Naive thymus-derived CD4-positive, alpha-beta T cell (primary cell): ENCODE measurements at regions of chr6 and their contacts with region 1.

Region 1: DNA sequence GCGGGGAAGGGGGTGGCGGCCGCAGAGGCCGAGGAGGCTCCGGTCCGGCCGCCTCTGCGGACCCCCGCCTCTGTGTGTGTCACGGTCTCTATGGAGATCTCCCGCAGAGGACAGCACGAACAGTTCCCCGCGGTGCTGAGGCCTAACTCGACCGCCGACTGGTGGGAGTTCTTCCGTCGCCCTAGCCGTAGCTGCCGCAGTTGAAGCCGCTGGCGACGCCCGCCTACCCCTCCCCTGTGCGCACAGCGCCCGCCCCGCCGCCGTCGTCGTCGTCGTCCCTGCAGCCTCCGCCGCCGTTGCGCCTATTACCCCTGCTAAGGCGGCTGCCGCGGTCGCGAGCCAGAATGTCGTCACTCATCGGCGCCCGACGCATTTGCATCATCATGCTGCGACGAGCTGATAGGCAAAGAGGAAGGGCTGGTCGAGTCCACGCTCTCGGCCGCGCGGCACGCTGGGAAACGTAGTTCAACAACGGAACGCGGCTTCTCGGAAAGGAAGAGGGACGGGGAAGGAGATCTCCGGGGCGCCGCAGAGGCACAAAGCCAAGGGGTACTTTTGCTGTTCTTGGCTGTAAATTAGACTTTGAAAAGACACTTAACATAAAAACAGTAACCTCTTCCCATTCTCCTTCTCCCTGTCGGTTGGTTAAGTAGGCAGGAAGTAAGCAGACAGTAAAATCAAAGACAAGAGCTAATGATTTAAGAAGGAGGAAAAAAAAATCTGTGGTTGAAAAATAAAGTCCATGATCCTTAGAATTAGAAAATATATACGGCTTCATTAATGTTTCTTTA is at the start of gene NUP153:
- DNase-seq: peak; percentile 98 to 100 (median 99)
- ATAC-seq: peak; percentile 85
- H3K4me3 ChIP-seq: peak within 1 kb of the TSS; percentile 94
- H3K4me3 Mint-ChIP-seq: peak within 1 kb of the TSS; percentile 86 to 97 (median 94)
- H3K27ac ChIP-seq: peak within 1 kb of the TSS; percentile 100
- H3K27ac Mint-ChIP-seq: peak within 1 kb of the TSS; percentile 92 to 98 (median 95)
- H3K4me1 ChIP-seq: peaks cover 24 to 28% of the 10 kb centered on the region in 2 donors
- H3K4me1 Mint-ChIP-seq: peaks cover 13 to 53% (median 37%) of the 10 kb centered on the region in 7 donors
- H3K27me3 ChIP-seq: no peaks in the 10 kb centered on the region
- H3K27me3 Mint-ChIP-seq: peaks cover 0 to 2% (median 0%) of the 10 kb centered on the region in 5 donors
- total RNA-seq, gene NUP153: 47.7 to 90.9 (median 53.0) TPM

Region 2: GRCh38 chr6:17599885-17600526 is 106.8 kb before region 1 on chr6 and contains the start of gene FAM8A1:
- CTCF ChIA-PET with region 1: interaction called, 5 read pairs
- POLR2A ChIA-PET with region 1: interaction called, 44 read pairs
- intact Hi-C with region 1: loop called (anchors 1 kb)
- DNase-seq: peak; percentile 91 to 97 (median 94)
- ATAC-seq: peak; percentile 97
- H3K4me3 ChIP-seq: peak within 1 kb of the TSS; percentile 49
- H3K4me3 Mint-ChIP-seq: peak within 1 kb of the TSS; percentile 85 to 97 (median 94)
- H3K27ac ChIP-seq: peak within 1 kb of the TSS; percentile 94
- H3K27ac Mint-ChIP-seq: peak within 1 kb of the TSS; percentile 84 to 96 (median 93)
- H3K4me1 ChIP-seq: peaks cover 19 to 29% of the 10 kb centered on the region in 2 donors
- H3K4me1 Mint-ChIP-seq: peaks cover 29 to 48% (median 45%) of the 10 kb centered on the region in 7 donors
- H3K27me3 ChIP-seq: no peaks in the 10 kb centered on the region
- H3K27me3 Mint-ChIP-seq: no peaks in the 10 kb centered on the region
- total RNA-seq, gene FAM8A1: 8.0 to 26.1 (median 21.1) TPM

Region 3: DNA sequence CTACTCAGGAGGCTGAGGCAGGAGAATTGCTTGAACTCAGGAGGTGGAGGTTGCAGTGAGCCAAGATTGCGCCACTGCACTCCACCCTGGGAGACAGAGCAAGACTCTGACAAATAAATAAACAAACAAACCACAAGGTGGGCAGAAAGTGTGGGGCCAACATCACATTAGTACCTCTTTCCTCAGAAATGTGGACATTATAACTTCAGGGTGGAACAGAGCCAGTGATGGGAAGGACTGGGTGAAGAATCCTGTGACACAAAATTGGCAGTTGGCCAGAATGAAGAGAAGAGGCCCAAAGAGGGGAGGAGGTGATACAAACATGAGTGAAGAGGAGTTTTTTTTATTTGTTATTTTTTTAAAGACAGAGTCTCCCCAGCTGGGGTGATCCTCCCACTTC is 50.7 kb before region 1 on chr6:
- CTCF ChIA-PET with region 1: no interaction called
- POLR2A ChIA-PET with region 1: no interaction called
- intact Hi-C with region 1: loop called in 1 of 2 experiments (anchors 10 kb)
- DNase-seq: no peak
- ATAC-seq: no peak
- H3K4me3 ChIP-seq: no peak overlapping the region
- H3K4me3 Mint-ChIP-seq: no peak overlapping the region
- H3K27ac ChIP-seq: no peak overlapping the region
- H3K27ac Mint-ChIP-seq: peak overlapping the region in 3 of 9 donors; percentile 37 to 66 (median 62)
- H3K4me1 ChIP-seq: peaks cover 0 to 4% of the 10 kb centered on the region in 2 donors
- H3K4me1 Mint-ChIP-seq: peaks cover 3 to 33% (median 12%) of the 10 kb centered on the region in 7 donors
- H3K27me3 ChIP-seq: no peaks in the 10 kb centered on the region
- H3K27me3 Mint-ChIP-seq: no peaks in the 10 kb centered on the region

Region 4: GRCh38 chr6:17666646-17667045 is 40.1 kb before region 1 on chr6:
- CTCF ChIA-PET with region 1: no interaction called
- POLR2A ChIA-PET with region 1: no interaction called
- intact Hi-C with region 1: loop called (anchors 1 to 5 kb)
- DNase-seq: no peak
- ATAC-seq: no peak
- H3K4me3 ChIP-seq: no peak overlapping the region
- H3K4me3 Mint-ChIP-seq: peak overlapping the region in 1 of 10 donors; percentile 8
- H3K27ac ChIP-seq: no peak overlapping the region
- H3K27ac Mint-ChIP-seq: peak overlapping the region in 5 of 9 donors; percentile 13 to 92 (median 72)
- H3K4me1 ChIP-seq: peaks cover 0 to 13% of the 10 kb centered on the region in 2 donors
- H3K4me1 Mint-ChIP-seq: peaks cover 11 to 39% (median 27%) of the 10 kb centered on the region in 7 donors
- H3K27me3 ChIP-seq: no peaks in the 10 kb centered on the region
- H3K27me3 Mint-ChIP-seq: no peaks in the 10 kb centered on the region

Region 5: DNA sequence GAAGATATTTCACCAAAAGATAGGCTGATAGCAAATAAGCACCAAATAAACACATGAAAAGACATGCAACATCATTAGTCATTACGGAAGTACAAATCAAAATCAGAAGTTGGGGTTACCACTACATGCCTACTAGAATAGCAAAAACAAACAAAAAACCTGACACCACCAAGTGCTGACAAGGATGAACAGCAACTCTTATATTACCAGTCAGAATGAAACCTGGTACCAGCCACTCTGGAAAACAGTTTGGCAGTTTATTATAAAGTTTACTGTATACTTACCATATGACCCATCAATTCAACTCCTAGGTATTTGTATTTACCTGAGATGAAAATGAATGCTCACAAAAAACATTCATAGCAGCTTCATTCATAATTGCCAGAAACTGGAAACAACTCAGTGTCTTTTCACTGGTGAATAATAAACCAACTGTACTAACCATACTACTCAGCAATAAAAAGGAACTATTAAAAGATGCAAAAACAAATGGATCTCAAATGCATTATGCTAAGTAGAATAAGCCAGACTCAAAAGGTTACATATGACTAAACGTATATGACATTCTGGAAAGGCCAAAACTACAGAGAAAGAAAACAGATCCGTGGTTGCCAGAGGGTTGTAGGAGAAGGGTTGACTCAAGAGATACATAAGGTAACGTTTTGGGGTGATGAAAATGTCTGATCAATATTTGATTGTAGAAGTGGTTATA is 33.1 kb before region 1 on chr6:
- CTCF ChIA-PET with region 1: interaction called, 3 read pairs
- POLR2A ChIA-PET with region 1: interaction called, 4 read pairs
- intact Hi-C with region 1: loop called in 1 of 2 experiments (anchors 5 kb)
- DNase-seq: no peak
- ATAC-seq: peak; percentile 38
- H3K4me3 ChIP-seq: no peak overlapping the region
- H3K4me3 Mint-ChIP-seq: no peak overlapping the region
- H3K27ac ChIP-seq: no peak overlapping the region
- H3K27ac Mint-ChIP-seq: peak overlapping the region in 1 of 9 donors; percentile 55
- H3K4me1 ChIP-seq: peaks cover 4 to 6% of the 10 kb centered on the region in 2 donors
- H3K4me1 Mint-ChIP-seq: peaks cover 0 to 30% (median 24%) of the 10 kb centered on the region in 7 donors
- H3K27me3 ChIP-seq: no peaks in the 10 kb centered on the region
- H3K27me3 Mint-ChIP-seq: no peaks in the 10 kb centered on the region

Region 6: DNA sequence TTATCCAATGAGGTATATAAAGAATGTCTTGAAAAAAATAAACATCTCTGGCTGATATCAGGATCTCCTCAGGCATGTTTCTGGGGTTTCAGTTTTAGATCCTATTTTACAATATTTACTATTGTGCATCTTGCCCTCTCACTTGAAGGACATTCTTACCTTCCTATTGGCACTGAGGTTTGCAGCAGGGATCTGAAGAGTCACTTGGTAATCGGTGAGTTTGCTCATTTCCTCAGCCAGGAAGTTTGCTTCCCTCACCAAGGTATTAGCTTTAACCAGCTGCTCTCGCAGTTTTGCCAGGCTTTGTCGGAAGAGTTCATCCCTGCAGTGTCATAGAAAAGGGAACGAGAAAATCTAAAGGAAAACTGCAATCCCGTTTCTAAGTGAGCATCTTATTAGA is 101.8 kb after region 1 on chr6:
- CTCF ChIA-PET with region 1: interaction called, 9 read pairs
- POLR2A ChIA-PET with region 1: no interaction called
- intact Hi-C with region 1: loop called (anchors 1 kb)
- DNase-seq: no peak
- ATAC-seq: no peak
- H3K4me3 ChIP-seq: no peak overlapping the region
- H3K4me3 Mint-ChIP-seq: no peak overlapping the region
- H3K27ac ChIP-seq: no peak overlapping the region
- H3K27ac Mint-ChIP-seq: no peak overlapping the region
- H3K4me1 ChIP-seq: no peaks in the 10 kb centered on the region
- H3K4me1 Mint-ChIP-seq: peaks cover 0 to 4% (median 0%) of the 10 kb centered on the region in 7 donors
- H3K27me3 ChIP-seq: no peaks in the 10 kb centered on the region
- H3K27me3 Mint-ChIP-seq: peaks cover 0 to 24% (median 12%) of the 10 kb centered on the region in 5 donors

Region 7: GRCh38 chr6:18387061-18387721 is 680.4 kb after region 1 on chr6 and contains the start of gene RNF144B:
- CTCF ChIA-PET with region 1: no interaction called
- POLR2A ChIA-PET with region 1: no interaction called
- intact Hi-C with region 1: loop called in 1 of 2 experiments (anchors 5 kb)
- DNase-seq: peak; percentile 41 to 73 (median 67)
- ATAC-seq: peak; percentile 92
- H3K4me3 ChIP-seq: peak within 1 kb of the TSS; percentile 70
- H3K4me3 Mint-ChIP-seq: peak within 1 kb of the TSS; percentile 90 to 100 (median 99)
- H3K27ac ChIP-seq: peak within 1 kb of the TSS; percentile 69
- H3K27ac Mint-ChIP-seq: peak within 1 kb of the TSS; percentile 2 to 95 (median 92)
- H3K4me1 ChIP-seq: peaks cover 4 to 18% of the 10 kb centered on the region in 2 donors
- H3K4me1 Mint-ChIP-seq: peaks cover 15 to 48% (median 35%) of the 10 kb centered on the region in 7 donors
- H3K27me3 ChIP-seq: no peaks in the 10 kb centered on the region
- H3K27me3 Mint-ChIP-seq: peaks cover 0 to 21% (median 0%) of the 10 kb centered on the region in 5 donors
- total RNA-seq, gene RNF144B: 1.5 to 23.5 (median 7.9) TPM